WTC11 (cell line): ENCODE measurements at regions of chr1 and their contacts with region 1.

Region 1: GRCh38 chr1:179706339-179706941 is 36.7 kb upstream of the FAM163A start:
- DNase-seq: peak; percentile 53
- ATAC-seq: peak; percentile 41; the same call in 1 of the 2 replicates
- H3K4me3 Mint-ChIP-seq: no peak overlapping the region
- H3K27ac Mint-ChIP-seq: no peak overlapping the region
- H3K4me1 Mint-ChIP-seq: no peaks in the 10 kb centered on the region
- H3K27me3 Mint-ChIP-seq: no peaks in the 10 kb centered on the region
- CTCF ChIP-seq: peak; percentile 68

Region 2: GRCh38 chr1:179293340-179294327 is 412.8 kb before region 1 on chr1 and contains the start of gene SOAT1:
- CTCF ChIA-PET with region 1: interaction called, 10 read pairs
- POLR2A ChIA-PET with region 1: no interaction called
- DNase-seq: peak; percentile 96
- ATAC-seq: peak; percentile 98
- H3K4me3 Mint-ChIP-seq: peak within 1 kb of the TSS; percentile 83
- H3K27ac Mint-ChIP-seq: 0 out of 2 replicates have a peak within 1 kb of the TSS, but pooled peaks have one; percentile 53
- H3K4me1 Mint-ChIP-seq: peaks cover 18% of the 10 kb centered on the region
- H3K27me3 Mint-ChIP-seq: peaks cover 83% of the 10 kb centered on the region
- CTCF ChIP-seq: no peak
- total RNA-seq, gene SOAT1: 2.3 to 3.0 TPM (median 2.7 TPM) in 3 replicates

Region 3: DNA sequence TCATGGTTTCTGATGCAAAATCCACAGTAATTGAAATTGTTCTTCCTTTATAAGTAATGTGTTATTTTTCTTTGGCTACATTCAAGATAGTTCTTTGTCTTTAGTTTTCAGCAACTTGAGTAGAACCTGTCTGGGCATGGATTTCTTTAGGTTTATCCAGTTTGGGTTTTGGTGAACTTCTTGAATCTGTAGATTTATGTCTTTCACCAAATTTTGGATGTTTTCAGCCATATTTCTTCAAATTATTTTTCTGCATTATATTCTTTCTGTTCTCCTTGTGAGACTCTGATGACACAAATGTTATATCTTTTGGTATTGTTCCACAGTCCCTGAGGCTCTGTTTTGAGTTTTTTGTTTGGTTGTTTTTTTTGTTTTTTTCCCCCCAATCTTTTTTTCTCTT is 45.4 kb before region 1 on chr1:
- CTCF ChIA-PET with region 1: no interaction called
- POLR2A ChIA-PET with region 1: no interaction called
- DNase-seq: no peak
- ATAC-seq: no peak
- H3K4me3 Mint-ChIP-seq: no peak overlapping the region
- H3K27ac Mint-ChIP-seq: no peak overlapping the region
- H3K4me1 Mint-ChIP-seq: no peaks in the 10 kb centered on the region
- H3K27me3 Mint-ChIP-seq: no peaks in the 10 kb centered on the region
- CTCF ChIP-seq: no peak

Region 4: DNA sequence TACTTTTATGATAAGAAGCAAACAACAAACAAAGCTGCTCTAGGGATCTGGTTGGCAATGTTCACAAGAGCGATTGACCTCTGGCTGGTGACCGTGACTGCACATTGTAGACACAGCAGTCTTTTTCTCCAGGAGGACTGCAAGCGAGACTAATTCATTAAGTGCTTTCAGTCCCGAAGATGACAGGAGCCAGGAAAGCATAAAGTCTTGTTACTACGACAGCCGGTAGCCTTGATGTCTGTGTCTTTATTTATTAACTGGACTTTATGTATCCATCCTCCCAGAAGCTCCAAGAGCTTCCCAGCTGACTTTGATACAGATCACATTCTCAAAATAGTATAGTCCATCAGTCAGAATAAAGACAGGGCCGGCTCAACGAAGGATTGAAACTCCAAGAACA is 54.9 kb after region 1 on chr1:
- CTCF ChIA-PET with region 1: interaction called, 18 read pairs
- POLR2A ChIA-PET with region 1: no interaction called
- DNase-seq: no peak
- ATAC-seq: no peak
- H3K4me3 Mint-ChIP-seq: no peak overlapping the region
- H3K27ac Mint-ChIP-seq: no peak overlapping the region
- H3K4me1 Mint-ChIP-seq: peaks cover 12% of the 10 kb centered on the region; the same call in 1 of the 2 replicates
- H3K27me3 Mint-ChIP-seq: peaks cover 2% of the 10 kb centered on the region
- CTCF ChIP-seq: no peak

Region 5: DNA sequence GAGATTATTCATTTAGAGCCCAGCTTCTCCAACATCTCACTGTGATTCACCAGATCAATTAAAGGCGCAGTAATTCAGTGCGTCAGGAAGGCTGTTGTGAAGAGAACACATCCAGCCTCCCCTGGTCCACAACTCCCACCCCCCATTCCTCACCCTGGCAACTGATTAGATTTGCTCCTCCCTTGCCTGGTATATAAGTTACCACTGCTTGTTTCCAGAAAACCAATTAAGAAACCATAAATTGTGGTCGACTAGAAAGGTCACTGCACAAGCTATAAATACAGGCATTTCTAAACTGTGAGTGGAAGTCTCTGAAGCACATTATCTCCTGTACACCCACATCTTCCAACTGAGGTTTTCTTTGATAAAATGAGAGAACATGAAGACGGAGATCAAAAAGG is 78.6 kb after region 1 on chr1:
- CTCF ChIA-PET with region 1: interaction called, 24 read pairs
- POLR2A ChIA-PET with region 1: interaction called, 3 read pairs
- DNase-seq: no peak
- ATAC-seq: no peak
- H3K4me3 Mint-ChIP-seq: no peak overlapping the region
- H3K27ac Mint-ChIP-seq: no peak overlapping the region
- H3K4me1 Mint-ChIP-seq: peaks cover 22% of the 10 kb centered on the region
- H3K27me3 Mint-ChIP-seq: no peaks in the 10 kb centered on the region
- CTCF ChIP-seq: no peak

Region 6: DNA sequence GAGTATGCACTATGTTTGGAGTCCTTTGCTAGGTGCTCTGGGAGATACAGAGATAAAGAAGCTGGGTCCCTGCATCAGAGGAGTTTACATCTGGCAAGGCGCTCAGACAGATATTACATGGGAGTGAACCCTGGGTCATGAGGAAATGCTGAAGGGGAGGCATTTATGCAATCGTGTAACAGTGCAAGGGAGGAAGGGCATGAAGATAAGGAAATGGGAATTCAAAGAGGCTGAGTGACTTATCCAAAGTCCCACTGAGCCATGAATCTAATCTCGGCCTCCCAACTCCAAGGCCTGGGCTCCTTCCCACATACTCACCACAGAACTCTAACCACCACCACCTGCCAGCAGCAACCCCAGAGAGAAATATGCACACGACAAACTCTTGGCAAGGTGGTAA is 88.2 kb after region 1 on chr1:
- CTCF ChIA-PET with region 1: interaction called, 19 read pairs
- POLR2A ChIA-PET with region 1: no interaction called
- DNase-seq: no peak
- ATAC-seq: peak; percentile 30
- H3K4me3 Mint-ChIP-seq: no peak overlapping the region
- H3K27ac Mint-ChIP-seq: no peak overlapping the region
- H3K4me1 Mint-ChIP-seq: peaks cover 9% of the 10 kb centered on the region
- H3K27me3 Mint-ChIP-seq: no peaks in the 10 kb centered on the region
- CTCF ChIP-seq: no peak

Region 7: GRCh38 chr1:179917601-179918429 is 211.4 kb after region 1 on chr1:
- CTCF ChIA-PET with region 1: no interaction called
- POLR2A ChIA-PET with region 1: no interaction called
- DNase-seq: no peak
- ATAC-seq: no peak
- H3K4me3 Mint-ChIP-seq: no peak overlapping the region
- H3K27ac Mint-ChIP-seq: no peak overlapping the region
- H3K4me1 Mint-ChIP-seq: peaks cover 21% of the 10 kb centered on the region
- H3K27me3 Mint-ChIP-seq: no peaks in the 10 kb centered on the region
- CTCF ChIP-seq: no peak